ENCODE measurements at regions of chr11 and their contacts with region 1.

Region 1: DNA sequence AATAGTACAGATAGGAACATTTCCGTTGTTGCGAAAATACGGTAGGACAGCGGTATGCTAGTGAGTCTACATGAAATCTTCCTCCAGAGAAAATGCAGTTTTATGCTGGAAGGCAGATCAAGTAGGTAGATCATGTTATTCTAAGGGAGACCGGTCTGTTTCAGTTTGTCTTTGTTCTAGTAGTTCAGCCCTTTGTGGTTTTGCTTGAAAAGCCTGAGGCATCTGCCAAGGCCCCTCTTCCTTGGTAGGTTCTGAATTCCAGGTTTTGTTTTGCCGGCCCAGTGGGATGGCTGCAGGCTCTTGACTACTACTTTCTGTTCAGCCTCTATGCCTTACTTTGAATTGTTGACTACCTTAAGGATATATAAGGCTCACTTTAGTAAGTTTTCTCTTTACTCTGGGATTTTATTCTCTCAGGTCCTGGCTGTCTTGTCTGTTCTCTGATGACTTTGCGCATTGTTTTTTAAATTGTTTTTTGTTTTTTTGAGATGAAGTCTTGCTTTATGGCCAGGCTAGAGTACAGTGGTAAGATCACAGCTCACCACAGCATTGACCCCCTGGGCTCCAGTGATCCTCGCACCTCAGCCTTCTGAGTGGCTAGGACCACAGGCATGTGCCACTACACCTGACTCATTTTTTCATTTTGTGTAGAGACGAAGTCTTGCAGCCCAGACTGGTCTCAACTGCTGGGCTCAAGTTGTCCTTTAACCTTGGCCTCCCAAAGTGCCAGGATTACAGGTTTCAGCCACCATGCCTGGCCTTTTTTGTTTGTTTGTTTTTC is 53.7 kb downstream of the HIPK3 start:
- DNase-seq: no peak

Region 2: DNA sequence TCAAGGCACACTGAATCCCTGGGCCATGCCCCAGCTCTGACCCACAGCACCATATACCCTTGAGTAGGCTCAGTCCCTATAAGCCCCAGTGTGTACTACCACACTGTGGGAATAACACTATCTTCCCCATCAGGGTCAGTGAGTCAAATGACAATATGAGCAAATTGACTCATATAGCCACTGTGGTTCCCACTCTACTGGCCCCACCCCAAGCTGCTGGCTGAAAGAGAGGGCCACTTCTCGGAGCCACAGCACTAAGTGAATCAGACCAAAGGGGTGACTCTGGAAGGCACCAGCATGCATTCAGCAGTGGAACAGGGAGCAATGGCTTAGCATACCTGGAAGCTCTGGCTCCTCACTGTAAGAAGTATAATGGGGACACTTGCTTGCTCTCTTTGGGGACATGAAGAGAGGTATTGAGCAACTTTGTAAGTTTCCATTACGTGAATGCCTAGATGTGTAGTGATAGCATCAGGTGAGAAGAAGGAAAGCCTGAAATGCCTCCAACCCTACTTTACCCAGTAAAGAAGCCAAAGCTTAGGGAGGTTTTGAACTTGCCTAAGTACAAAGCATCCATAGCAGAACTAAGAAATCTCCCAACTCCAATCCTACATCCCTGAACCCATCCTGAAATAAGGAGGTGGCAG is 411.8 kb after region 1 on chr11:
- CTCF ChIA-PET with region 1: interaction called, 11 read pairs
- POLR2A ChIA-PET with region 1: no interaction called
- DNase-seq: no peak